HepG2 (cell line): ENCODE measurements at regions of chr2 and their contacts with region 1.

Region 1: DNA sequence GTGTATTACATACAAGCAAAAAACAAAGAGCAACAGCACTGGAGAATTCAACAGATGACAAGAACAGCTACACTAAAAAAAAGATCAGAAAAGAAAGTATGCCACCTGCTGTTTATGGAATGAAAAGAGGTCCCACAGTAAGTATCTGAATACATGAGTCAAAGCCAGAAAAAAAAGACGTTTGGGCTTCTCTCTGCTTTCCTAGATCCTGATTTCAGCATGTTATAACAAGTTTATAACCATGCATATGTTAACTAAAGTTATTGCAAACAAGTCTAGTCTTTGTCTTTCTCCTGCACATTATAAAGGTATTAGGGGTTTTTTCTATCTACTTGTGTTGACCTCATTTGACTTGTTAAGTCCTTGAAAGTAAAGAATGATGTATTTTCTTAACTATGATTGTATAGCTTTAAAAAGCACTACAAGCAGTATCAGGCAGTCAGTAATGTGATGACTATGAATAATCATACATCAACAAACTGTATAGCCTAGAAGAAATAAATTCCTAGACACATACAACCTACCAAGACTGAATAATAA is 108.5 kb upstream of the COL5A2 start:
- DNase-seq: peak; percentile 49
- ATAC-seq: peak; percentile 72
- H3K4me3 ChIP-seq: no peak overlapping the region
- H3K27ac ChIP-seq: no peak overlapping the region
- H3K4me1 ChIP-seq: no peaks in the 10 kb centered on the region
- H3K27me3 ChIP-seq: no peaks in the 10 kb centered on the region
- CTCF ChIP-seq: peak; percentile 59
- EP300 ChIP-seq: no peak
- POLR2A ChIP-seq: no peak
- RAD21 ChIP-seq: peak; percentile 36; the same call in 1 of the 2 replicates

Region 2: GRCh38 chr2:188983427-188984064 is 304.5 kb before region 1 on chr2:
- CTCF ChIA-PET with region 1: no interaction called
- POLR2A ChIA-PET with region 1: no interaction called
- in situ Hi-C with region 1: no loop called
- intact Hi-C with region 1: loop called (anchors 1 kb)
- DNase-seq: peak; percentile 41
- ATAC-seq: peak; percentile 80
- H3K4me3 ChIP-seq: no peak overlapping the region
- H3K27ac ChIP-seq: no peak overlapping the region
- H3K4me1 ChIP-seq: no peaks in the 10 kb centered on the region
- H3K27me3 ChIP-seq: no peaks in the 10 kb centered on the region
- CTCF ChIP-seq: peak; percentile 47
- EP300 ChIP-seq: no peak
- POLR2A ChIP-seq: no peak
- RAD21 ChIP-seq: no peak

Region 3: DNA sequence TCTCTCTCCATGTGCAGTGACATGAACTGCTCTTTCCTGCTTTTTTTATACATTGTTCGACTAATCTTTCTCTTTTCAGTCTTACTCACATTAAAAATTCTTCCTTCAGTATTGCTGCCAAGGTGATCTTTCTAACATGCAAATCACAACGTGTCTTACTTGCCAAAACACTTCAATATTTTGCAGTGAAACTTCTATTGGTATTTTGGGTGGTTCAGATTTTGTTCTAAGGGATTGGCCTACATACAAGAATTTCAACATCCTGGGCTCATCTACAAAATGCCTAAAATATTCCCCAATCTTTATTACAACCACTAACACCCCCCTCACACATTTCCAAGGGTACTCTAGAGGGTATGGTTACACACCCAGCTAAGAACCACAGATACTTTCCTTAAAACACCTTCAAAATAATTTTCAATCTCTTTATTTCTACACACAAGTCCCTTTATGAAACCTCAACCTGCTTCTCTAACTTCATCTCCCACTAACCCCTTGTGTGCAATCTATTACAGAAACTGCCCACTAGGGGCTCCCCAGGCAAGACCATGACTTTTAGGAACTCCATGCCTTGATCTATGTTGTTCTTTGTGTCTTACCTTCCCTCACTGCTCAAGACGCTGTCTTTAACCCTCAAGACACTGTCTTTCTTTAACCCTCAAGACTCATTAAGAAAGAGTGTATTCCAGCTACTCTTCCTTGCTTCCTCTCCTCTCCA is 263.0 kb before region 1 on chr2:
- CTCF ChIA-PET with region 1: interaction called, 3 read pairs
- POLR2A ChIA-PET with region 1: no interaction called
- in situ Hi-C with region 1: no loop called
- intact Hi-C with region 1: loop called (anchors 2 kb)
- DNase-seq: peak; percentile 18
- ATAC-seq: peak; percentile 67
- H3K4me3 ChIP-seq: no peak overlapping the region
- H3K27ac ChIP-seq: no peak overlapping the region
- H3K4me1 ChIP-seq: no peaks in the 10 kb centered on the region
- H3K27me3 ChIP-seq: no peaks in the 10 kb centered on the region
- CTCF ChIP-seq: peak; percentile 29; the same call in 1 of the 2 replicates
- EP300 ChIP-seq: no peak
- POLR2A ChIP-seq: no peak
- RAD21 ChIP-seq: peak; percentile 31; the same call in 1 of the 2 replicates

Region 4: DNA sequence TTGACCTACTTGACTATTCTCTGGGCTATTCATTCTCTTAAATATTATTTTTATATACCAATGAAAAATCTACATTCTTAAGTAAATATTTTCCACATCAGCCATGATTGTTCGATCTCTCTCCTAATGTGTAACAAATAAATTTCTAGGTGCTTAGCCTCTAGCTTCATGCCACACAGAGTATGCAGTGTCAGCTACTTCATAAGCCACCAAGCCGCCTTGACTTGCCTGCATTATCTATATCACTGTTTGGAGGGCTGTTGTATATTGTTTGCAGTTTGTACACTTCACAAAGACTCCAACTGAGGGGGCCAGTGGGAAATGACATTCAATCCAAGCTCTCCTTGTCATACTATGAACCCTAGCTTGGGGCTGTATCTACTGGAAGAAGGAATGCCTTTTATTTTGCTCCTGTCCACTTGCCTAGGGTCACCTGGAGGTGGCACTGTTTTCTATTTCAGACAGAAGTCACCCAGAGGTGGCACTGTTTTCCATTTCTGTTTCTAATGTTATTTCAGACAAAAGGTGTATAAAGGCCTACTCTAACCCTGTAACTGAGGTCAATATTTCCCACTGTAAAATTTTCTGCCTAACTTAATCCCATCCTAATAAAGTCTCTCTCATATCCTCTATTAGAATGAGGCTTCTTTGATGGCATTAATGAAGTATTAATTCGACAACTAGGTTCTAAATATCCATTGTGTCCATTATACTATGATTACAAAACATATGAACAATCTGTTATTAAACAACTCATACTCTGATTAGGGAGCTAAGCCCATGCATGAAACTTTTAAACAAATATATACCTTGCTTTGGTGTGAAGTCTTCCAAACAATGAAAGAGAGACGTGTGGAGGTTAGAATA is 144.9 kb before region 1 on chr2:
- CTCF ChIA-PET with region 1: interaction called, 42 read pairs
- POLR2A ChIA-PET with region 1: no interaction called
- in situ Hi-C with region 1: no loop called
- intact Hi-C with region 1: loop called (anchors 1 kb)
- DNase-seq: peak; percentile 76
- ATAC-seq: peak; percentile 100
- H3K4me3 ChIP-seq: no peak overlapping the region
- H3K27ac ChIP-seq: no peak overlapping the region
- H3K4me1 ChIP-seq: no peaks in the 10 kb centered on the region
- H3K27me3 ChIP-seq: no peaks in the 10 kb centered on the region
- CTCF ChIP-seq: peak; percentile 87
- EP300 ChIP-seq: no peak
- POLR2A ChIP-seq: no peak
- RAD21 ChIP-seq: peak; percentile 79